Keratinocyte (primary cell): ENCODE measurements at regions of chr13 and their contacts with region 1.

Region 1: GRCh38 chr13:44312898-44313551 is 60.6 kb upstream of the SERP2 start:
- DNase-seq: peak; percentile 94
- H3K4me3 ChIP-seq: peak overlapping the region in 2 of 3 experiments; percentile 51 to 52
- H3K27ac ChIP-seq: peak overlapping the region; percentile 100
- H3K4me1 ChIP-seq: peaks cover 60% of the 10 kb centered on the region
- H3K27me3 ChIP-seq: no peaks in the 10 kb centered on the region
- CTCF ChIP-seq: no peak

Region 2: DNA sequence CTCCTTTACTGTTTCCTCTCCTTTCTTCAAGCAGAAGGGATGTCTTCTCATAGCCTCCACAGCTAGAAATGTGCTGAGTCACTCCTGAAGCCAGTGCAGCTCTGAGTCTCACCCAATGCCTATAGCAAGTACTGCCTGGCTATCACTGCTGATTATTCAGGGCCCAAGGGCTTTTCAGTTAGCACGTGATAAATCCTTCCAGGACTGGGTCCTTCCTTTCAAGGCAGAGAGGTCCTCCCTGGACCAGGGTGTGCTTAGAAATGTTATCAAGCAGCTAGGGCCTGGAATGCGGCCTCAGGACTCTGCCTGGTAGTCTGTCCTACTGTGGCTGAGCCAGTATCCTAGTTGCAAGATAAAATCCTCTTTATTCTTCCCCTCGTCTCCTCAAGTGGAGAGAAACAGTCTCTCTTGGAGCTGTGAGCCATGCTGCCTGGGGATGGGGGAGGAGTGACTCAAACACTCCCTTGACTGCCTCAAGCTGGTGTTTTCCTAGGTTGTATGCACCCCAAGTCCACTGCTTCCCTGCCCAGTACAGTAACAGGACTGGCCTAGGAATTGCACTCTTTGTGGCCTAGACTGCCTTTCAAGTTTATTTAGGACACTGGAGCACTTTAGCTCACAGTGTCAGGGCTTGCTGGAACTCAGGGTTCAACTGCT is 138.1 kb before region 1 on chr13:
- dilution Hi-C with region 1: loop called (anchors 10 kb)
- DNase-seq: no peak
- H3K4me3 ChIP-seq: no peak overlapping the region
- H3K27ac ChIP-seq: peak overlapping the region; percentile 50
- H3K4me1 ChIP-seq: peaks cover 10% of the 10 kb centered on the region
- H3K27me3 ChIP-seq: no peaks in the 10 kb centered on the region
- CTCF ChIP-seq: no peak

Region 3: GRCh38 chr13:44451126-44451525 is 138.1 kb after region 1 on chr13:
- dilution Hi-C with region 1: no loop called
- DNase-seq: no peak
- H3K4me3 ChIP-seq: no peak overlapping the region
- H3K27ac ChIP-seq: no peak overlapping the region
- H3K4me1 ChIP-seq: no peaks in the 10 kb centered on the region
- H3K27me3 ChIP-seq: no peaks in the 10 kb centered on the region
- CTCF ChIP-seq: no peak